IMR-90 (cell line): ENCODE measurements at regions of chr18 and their contacts with region 1.

Region 1: GRCh38 chr18:73614812-73615211 is 532.8 kb downstream of the FBXO15 start:
- DNase-seq: peak; percentile 88
- ATAC-seq: peak; percentile 88
- H3K4me3 ChIP-seq: no peak overlapping the region
- H3K27ac ChIP-seq: no peak overlapping the region
- H3K4me1 ChIP-seq: peaks cover 11% of the 10 kb centered on the region; the same call in 1 of the 2 replicates
- H3K27me3 ChIP-seq: no peaks in the 10 kb centered on the region
- CTCF ChIP-seq: no peak
- POLR2A ChIP-seq: no peak
- RAD21 ChIP-seq: no peak

Region 2: DNA sequence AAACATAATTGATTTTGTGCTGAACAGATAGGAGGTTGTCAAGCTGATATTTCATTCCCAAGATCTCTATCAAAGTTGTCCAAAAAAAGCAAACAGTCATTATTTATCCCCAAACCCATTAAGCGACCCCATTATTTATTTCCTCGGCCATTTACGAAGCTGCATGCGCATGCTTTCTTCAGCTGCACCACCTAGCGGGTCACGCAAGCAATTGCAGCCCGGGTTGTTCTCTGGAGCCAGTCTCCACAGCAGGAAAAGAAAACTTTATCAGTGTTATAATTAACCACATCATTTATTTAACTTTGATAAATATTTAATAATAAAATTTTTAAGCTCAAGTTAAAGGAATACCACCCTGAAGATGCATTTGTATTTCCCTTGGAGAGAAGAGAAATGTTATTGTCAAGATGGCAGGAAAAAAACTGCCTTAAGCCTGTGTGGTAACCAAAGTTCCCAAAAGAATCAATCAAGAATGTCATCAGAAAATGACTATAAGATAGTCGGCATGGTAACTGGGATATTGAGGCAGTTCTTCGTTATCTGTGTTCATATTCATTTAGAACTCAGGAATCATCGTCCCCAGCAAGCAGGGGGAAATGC is 228.1 kb after region 1 on chr18:
- CTCF ChIA-PET with region 1: no interaction called
- POLR2A ChIA-PET with region 1: no interaction called
- dilution Hi-C with region 1: no loop called
- in situ Hi-C with region 1: no loop called
- intact Hi-C with region 1: loop called (anchors 10 kb)
- DNase-seq: peak; percentile 65
- ATAC-seq: peak; percentile 91
- H3K4me3 ChIP-seq: no peak overlapping the region
- H3K27ac ChIP-seq: no peak overlapping the region
- H3K4me1 ChIP-seq: 0 out of 2 replicates have a peak, but pooled peaks cover 4% of the 10 kb centered on the region
- H3K27me3 ChIP-seq: no peaks in the 10 kb centered on the region
- CTCF ChIP-seq: peak; percentile 91
- POLR2A ChIP-seq: no peak
- RAD21 ChIP-seq: peak; percentile 88